ENCODE measurements at regions of chr5 and their contacts with region 1.

Region 1: DNA sequence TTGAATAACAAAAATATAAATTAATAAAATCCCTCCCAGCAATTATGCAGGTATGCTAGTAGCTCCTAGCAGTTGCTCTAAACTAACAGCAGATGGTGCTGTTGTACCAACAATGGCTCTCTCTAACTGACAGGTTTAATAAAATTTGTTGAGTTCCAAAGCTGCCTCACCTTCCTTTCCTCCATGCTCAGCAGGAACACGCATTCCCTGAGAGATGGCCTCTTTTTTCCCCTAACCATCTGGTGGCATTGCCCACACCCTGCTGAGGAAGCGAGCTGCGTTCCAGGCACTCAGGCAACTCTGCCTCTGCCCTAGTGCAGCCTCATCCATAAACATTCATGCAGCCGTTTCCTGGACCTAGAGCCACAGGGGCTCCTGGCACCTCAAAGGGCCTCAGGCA is 106.2 kb downstream of the KLHL3 start:
- DNase-seq: peak; percentile 38
- H3K4me3 ChIP-seq: no peak overlapping the region
- H3K27ac ChIP-seq: no peak overlapping the region
- H3K4me1 ChIP-seq: no peaks in the 10 kb centered on the region
- H3K27me3 ChIP-seq: no peaks in the 10 kb centered on the region
- CTCF ChIP-seq: peak; percentile 83 to 98

Region 2: GRCh38 chr5:137594717-137595116 is 34.9 kb before region 1 on chr5:
- CTCF ChIA-PET with region 1: no interaction called
- dilution Hi-C with region 1: no loop called
- in situ Hi-C with region 1: no loop called
- intact Hi-C with region 1: no loop called
- DNase-seq: no peak
- H3K4me3 ChIP-seq: no peak overlapping the region
- H3K27ac ChIP-seq: no peak overlapping the region
- H3K4me1 ChIP-seq: no peaks in the 10 kb centered on the region
- H3K27me3 ChIP-seq: peaks cover 3% of the 10 kb centered on the region
- CTCF ChIP-seq: no peak

Region 3: DNA sequence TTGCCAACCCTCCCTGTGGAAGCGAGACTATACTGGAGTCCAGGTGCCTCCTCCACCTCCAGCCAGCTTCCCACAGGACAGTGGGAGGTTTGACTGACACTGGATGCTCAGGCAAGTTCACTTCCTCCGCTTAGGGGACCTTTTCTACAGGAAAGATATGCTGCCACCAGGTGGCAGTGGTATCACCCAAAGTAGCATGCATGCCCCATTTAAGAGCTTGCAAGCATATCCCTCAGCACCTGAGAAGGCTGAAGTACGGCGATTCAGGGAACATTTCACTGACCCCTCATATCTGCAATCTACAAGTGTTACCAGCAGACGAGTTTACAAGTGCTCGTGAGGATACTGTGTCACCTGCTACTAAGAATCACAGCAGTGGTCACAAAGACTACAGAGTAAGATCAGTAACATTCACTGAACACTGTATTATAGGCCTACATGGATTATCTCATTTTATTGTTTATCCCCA is 30.7 kb after region 1 on chr5:
- CTCF ChIA-PET with region 1: no interaction called
- dilution Hi-C with region 1: no loop called
- in situ Hi-C with region 1: no loop called
- intact Hi-C with region 1: loop called (anchors 2 kb)
- DNase-seq: peak; percentile 61
- H3K4me3 ChIP-seq: no peak overlapping the region
- H3K27ac ChIP-seq: no peak overlapping the region
- H3K4me1 ChIP-seq: peaks cover 4% of the 10 kb centered on the region
- H3K27me3 ChIP-seq: no peaks in the 10 kb centered on the region
- CTCF ChIP-seq: peak; percentile 82 to 85

Region 4: DNA sequence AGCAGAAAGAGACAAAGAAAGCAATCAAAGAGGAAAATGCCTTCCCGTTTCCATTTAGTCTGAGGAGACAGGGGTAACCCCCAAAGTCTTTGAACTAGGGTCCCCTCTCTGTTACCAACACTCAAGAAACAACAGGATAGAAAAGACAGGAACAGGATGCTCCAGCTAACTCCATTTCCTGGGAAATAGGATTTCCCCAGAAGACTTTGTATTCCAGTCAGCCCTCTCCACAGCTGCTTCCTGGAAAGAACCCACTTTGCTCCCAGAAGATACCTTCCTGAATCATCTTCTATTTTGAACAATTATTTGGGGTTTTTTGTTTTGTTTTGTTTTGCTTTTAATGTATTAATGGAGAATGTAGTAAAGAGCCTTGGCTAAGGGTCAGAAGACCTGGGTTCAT is 50.3 kb after region 1 on chr5:
- CTCF ChIA-PET with region 1: no interaction called
- dilution Hi-C with region 1: no loop called
- in situ Hi-C with region 1: no loop called
- intact Hi-C with region 1: no loop called
- DNase-seq: no peak
- H3K4me3 ChIP-seq: no peak overlapping the region
- H3K27ac ChIP-seq: no peak overlapping the region
- H3K4me1 ChIP-seq: no peaks in the 10 kb centered on the region
- H3K27me3 ChIP-seq: no peaks in the 10 kb centered on the region
- CTCF ChIP-seq: no peak

Region 5: GRCh38 chr5:137782984-137783536 is 153.4 kb after region 1 on chr5:
- CTCF ChIA-PET with region 1: no interaction called
- dilution Hi-C with region 1: no loop called
- in situ Hi-C with region 1: no loop called
- intact Hi-C with region 1: no loop called
- DNase-seq: no peak
- H3K4me3 ChIP-seq: no peak overlapping the region
- H3K27ac ChIP-seq: no peak overlapping the region
- H3K4me1 ChIP-seq: no peaks in the 10 kb centered on the region
- H3K27me3 ChIP-seq: peaks cover 2% of the 10 kb centered on the region
- CTCF ChIP-seq: no peak

Region 6: DNA sequence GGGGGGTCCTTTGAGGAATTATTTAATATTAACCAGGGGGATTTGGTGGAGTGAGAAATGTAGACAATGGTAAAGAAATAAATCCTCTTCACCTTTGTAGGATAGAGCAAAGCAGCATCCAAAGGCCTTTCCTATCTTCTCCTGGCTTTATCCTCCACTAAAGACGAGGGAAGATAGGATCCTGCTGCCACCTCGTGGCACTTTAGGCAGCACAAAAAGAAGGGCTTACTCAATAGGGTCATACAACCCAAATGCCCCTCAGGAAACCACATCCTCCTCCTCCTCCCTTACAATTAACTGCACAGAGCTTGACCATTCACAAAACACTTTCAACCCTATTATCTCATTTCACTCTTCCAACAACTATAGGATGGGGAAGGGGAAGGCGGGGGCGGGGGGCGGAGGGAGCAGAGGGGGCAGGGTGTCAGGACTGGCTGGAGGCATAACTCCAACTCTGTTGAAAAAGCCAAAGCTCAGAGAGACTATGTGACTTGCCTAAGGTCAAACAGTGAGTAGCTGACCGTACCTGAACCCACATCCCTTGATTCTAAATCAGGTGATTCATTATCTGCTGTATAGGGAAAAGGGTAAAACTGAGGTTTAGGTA is 192.6 kb after region 1 on chr5:
- CTCF ChIA-PET with region 1: no interaction called
- dilution Hi-C with region 1: no loop called
- in situ Hi-C with region 1: loop called in 1 of 2 experiments (anchors 10 kb)
- intact Hi-C with region 1: loop called (anchors 1 kb)
- DNase-seq: peak; percentile 28
- H3K4me3 ChIP-seq: no peak overlapping the region
- H3K27ac ChIP-seq: no peak overlapping the region
- H3K4me1 ChIP-seq: no peaks in the 10 kb centered on the region
- H3K27me3 ChIP-seq: no peaks in the 10 kb centered on the region
- CTCF ChIP-seq: peak; percentile 37 to 68

Region 7: DNA sequence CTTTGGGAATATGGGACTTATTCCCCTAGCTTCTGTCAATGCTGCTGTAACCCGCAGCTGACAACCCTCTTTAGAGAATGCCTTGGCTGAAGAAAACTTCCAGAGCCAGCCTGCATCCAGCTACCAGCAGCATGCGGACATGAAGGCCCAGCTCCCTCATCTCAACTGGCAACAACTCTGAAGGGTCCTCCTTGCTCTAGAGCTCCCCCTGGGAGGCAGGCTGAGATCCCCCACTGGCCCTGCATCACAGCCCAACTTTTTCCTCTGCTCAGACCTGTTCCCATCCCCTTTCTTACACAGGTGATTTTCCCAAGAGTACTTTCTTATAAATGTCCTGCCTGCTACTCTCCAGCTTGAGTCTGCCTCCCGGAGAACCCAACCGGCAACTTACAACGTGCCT is 435.5 kb after region 1 on chr5:
- CTCF ChIA-PET with region 1: no interaction called
- dilution Hi-C with region 1: no loop called
- in situ Hi-C with region 1: loop called in 1 of 2 experiments (anchors 10 kb)
- intact Hi-C with region 1: loop called (anchors 2 kb)
- DNase-seq: no peak
- H3K4me3 ChIP-seq: no peak overlapping the region
- H3K27ac ChIP-seq: no peak overlapping the region
- H3K4me1 ChIP-seq: no peaks in the 10 kb centered on the region
- H3K27me3 ChIP-seq: no peaks in the 10 kb centered on the region
- CTCF ChIP-seq: peak in 1 of 2 donors; percentile 28

Region 8: DNA sequence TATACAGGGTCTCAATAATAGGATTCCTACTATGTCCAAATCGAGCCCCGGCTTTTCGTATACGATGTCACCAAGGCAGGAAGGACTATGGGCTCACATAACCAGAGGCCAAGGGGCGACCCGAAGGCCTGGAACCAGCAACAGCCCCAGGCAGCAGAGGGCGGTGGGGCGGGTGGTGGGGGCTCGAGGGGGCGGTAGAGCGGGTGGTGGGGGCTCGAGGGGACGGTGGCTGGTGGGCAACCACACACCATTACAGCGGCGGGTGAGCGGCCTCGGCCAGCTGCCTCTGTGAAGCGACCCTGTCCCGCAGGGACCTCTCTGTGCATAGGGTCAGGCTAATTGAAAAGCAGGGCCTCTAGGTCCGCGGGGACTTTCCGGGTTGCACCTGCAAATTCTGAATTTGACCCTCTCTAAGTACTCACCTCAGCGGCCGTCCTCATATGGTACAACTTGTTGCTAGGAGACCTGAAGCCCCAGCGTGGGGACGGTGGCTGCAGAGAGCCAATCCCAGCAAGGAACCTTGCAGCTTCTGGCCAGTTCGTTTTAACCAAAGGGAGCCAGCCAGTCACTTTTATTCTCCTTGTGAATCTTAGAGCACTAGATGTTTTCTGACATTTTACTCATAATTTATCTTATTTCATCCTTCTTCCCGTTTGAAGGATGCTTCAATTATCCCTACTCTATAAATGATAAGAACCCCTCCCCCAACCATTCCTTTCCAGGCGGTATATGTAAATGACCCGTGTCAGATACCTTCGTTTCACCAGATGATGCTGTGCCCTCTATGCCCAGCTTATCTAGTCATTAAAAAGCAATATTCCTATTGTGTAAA is 509.5 kb after region 1 on chr5 and contains the start of gene NME5:
- CTCF ChIA-PET with region 1: no interaction called
- dilution Hi-C with region 1: no loop called
- in situ Hi-C with region 1: loop called in 1 of 2 experiments (anchors 25 kb)
- intact Hi-C with region 1: no loop called
- DNase-seq: no peak
- H3K4me3 ChIP-seq: peak within 1 kb of the TSS; percentile 39 to 45 (median 45)
- H3K27ac ChIP-seq: no peak within 1 kb of the TSS
- H3K4me1 ChIP-seq: peaks cover 3% of the 10 kb centered on the region
- H3K27me3 ChIP-seq: no peaks in the 10 kb centered on the region
- CTCF ChIP-seq: no peak
- total RNA-seq, gene NME5: 1.6 to 5.5 TPM

Measured in mammary epithelial cell (primary cell).